ENCODE measurements at regions of chr2 and their contacts with region 1.

Region 1: GRCh38 chr2:169528271-169528701 is 18.8 kb downstream of the KLHL41 start:
- DNase-seq: peak; percentile 55
- H3K4me3 Mint-ChIP-seq: no peak overlapping the region
- H3K27ac Mint-ChIP-seq: no peak overlapping the region
- H3K4me1 Mint-ChIP-seq: no peaks in the 10 kb centered on the region
- H3K27me3 Mint-ChIP-seq: no peaks in the 10 kb centered on the region

Region 2: DNA sequence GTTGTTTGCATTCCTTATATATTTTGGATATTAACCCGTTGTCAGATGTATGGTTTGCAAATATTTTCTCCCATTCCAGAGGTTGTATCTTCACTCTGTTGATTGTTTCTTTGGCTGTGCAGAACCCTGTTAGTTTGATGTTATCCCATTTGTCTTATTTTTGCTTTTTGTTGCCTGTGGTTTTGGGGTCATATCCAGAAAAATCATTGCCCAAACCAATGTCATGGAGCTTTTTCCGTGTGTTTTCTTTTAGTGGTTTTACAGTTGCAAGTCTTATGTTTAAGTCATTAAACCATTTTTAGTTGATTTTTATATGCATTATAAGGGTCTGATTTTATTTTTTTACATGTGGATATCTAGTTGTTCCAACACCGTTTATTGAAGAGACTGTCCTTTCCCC is 91.7 kb after region 1 on chr2:
- intact Hi-C with region 1: no loop called
- DNase-seq: no peak
- H3K4me3 Mint-ChIP-seq: no peak overlapping the region
- H3K27ac Mint-ChIP-seq: no peak overlapping the region
- H3K4me1 Mint-ChIP-seq: no peaks in the 10 kb centered on the region
- H3K27me3 Mint-ChIP-seq: no peaks in the 10 kb centered on the region

Region 3: DNA sequence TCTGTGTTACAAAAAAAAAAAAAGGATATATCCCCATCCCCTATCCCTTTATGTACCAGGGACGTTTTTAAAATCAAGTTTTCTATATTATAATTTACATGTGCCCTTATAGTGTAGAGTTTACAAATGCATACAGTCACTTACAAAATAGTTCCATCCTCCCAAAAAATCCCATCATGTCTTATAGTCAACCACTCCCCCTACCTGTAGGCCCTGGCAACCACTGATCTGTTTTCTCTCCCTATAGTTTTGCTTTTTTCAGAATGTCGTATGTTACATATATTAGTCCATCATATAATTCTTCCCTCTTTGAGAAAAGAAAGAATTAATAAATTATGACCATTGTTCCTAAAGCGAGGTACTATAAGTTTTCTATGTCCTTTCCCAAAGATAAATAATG is 148.1 kb after region 1 on chr2:
- intact Hi-C with region 1: loop called (anchors 1 kb)
- DNase-seq: no peak
- H3K4me3 Mint-ChIP-seq: no peak overlapping the region
- H3K27ac Mint-ChIP-seq: no peak overlapping the region
- H3K4me1 Mint-ChIP-seq: no peaks in the 10 kb centered on the region
- H3K27me3 Mint-ChIP-seq: peaks cover 20% of the 10 kb centered on the region

Region 4: GRCh38 chr2:169790581-169790980 is 262.3 kb after region 1 on chr2:
- intact Hi-C with region 1: loop called (anchors 1 kb)
- DNase-seq: no peak
- H3K4me3 Mint-ChIP-seq: no peak overlapping the region
- H3K27ac Mint-ChIP-seq: no peak overlapping the region
- H3K4me1 Mint-ChIP-seq: peaks cover 10% of the 10 kb centered on the region
- H3K27me3 Mint-ChIP-seq: peaks cover 28% of the 10 kb centered on the region

Region 5: GRCh38 chr2:169877398-169877797 is 349.1 kb after region 1 on chr2:
- intact Hi-C with region 1: loop called (anchors 5 kb)
- DNase-seq: no peak
- H3K4me3 Mint-ChIP-seq: no peak overlapping the region
- H3K27ac Mint-ChIP-seq: no peak overlapping the region
- H3K4me1 Mint-ChIP-seq: no peaks in the 10 kb centered on the region
- H3K27me3 Mint-ChIP-seq: no peaks in the 10 kb centered on the region

Region 6: GRCh38 chr2:169928463-169928864 is 400.2 kb after region 1 on chr2:
- intact Hi-C with region 1: loop called (anchors 1 kb)
- DNase-seq: no peak
- H3K4me3 Mint-ChIP-seq: no peak overlapping the region
- H3K27ac Mint-ChIP-seq: no peak overlapping the region
- H3K4me1 Mint-ChIP-seq: no peaks in the 10 kb centered on the region
- H3K27me3 Mint-ChIP-seq: no peaks in the 10 kb centered on the region

Measured in activated T-helper 1 cell treated with anti-CD3 and anti-CD28 coated beads, Interleukin-12 subunit alpha, Interleukin-12 subunit beta, Interleukin-2, Interleukin-4 antibody, amounts not matched to agents 30 ng/mL and 10 ng/mL and 1 ng/mL, durations not matched to agents 14 hours and 24 hours and 36 hours (primary cell).